AG04450 (cell line): ENCODE measurements at regions of chr12 and their contacts with region 1.

Region 1: DNA sequence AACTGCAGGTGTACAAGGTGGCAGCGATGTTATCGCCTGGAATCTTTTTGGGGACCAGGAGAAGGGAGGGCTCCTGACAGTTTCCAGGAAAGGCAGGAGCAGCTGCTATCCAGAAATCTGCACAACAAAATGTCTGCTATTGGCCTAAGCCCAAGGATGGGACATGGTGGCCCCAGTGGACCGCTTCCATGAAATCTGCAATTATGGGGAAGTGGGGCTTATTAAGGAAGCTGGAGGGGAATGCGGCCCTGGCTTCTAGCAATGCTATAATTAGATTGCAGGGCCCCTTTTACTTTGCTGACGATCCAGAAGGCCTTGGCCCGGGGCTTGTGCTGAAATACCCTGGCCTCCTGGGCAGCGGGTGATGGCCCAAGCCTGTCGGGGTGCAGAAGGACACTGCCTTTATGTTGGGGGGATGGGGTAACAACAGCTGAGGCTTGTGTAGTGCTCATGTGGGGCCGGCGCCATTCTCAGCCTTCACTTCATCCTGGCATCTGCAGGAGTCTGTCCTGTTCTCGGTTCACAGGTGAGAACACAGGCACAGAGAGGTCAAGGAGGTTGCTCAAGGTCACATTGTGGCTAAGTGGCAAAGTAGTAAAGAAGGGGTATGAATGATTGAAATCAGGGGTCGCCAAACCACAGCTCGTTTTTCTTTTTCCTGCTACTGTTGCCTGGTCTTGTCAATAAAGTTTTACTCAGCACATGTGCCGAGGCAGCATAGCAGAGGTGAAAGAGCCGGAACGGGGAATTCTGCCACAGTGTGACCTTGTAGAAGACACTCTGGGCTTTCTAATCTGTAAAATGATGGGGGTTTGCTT is 153.5 kb downstream of the RBM19 start:
- DNase-seq: no peak
- H3K4me3 ChIP-seq: no peak overlapping the region
- H3K27ac ChIP-seq: no peak overlapping the region
- H3K27me3 ChIP-seq: no peaks in the 10 kb centered on the region
- CTCF ChIP-seq: no peak

Region 2: DNA sequence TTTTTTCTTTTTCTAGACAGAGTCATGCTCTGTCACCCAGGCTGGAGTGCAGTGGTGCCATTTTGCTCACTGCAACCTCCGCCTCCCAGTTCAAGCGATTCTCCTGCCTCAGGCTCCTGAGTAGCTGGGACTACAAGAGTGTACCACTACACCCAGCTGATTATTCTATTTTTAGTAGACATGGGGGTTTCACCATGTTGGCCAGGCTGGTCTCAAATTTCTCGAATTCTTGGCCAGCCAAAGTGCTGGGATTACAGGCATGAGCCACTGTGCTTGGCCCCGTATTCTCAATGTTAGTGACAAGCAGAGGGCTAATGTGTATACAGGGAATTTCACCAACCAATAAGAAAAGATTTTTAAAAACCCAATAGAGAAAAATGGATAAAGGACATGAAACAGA is 445.8 kb before region 1 on chr12:
- CTCF ChIA-PET with region 1: no interaction called
- POLR2A ChIA-PET with region 1: interaction called, 12 read pairs
- DNase-seq: no peak
- H3K4me3 ChIP-seq: no peak overlapping the region
- H3K27ac ChIP-seq: no peak overlapping the region
- H3K27me3 ChIP-seq: no peaks in the 10 kb centered on the region
- CTCF ChIP-seq: no peak